H1 (cell line): ENCODE measurements at regions of chr12 and their contacts with region 1.

Region 1: DNA sequence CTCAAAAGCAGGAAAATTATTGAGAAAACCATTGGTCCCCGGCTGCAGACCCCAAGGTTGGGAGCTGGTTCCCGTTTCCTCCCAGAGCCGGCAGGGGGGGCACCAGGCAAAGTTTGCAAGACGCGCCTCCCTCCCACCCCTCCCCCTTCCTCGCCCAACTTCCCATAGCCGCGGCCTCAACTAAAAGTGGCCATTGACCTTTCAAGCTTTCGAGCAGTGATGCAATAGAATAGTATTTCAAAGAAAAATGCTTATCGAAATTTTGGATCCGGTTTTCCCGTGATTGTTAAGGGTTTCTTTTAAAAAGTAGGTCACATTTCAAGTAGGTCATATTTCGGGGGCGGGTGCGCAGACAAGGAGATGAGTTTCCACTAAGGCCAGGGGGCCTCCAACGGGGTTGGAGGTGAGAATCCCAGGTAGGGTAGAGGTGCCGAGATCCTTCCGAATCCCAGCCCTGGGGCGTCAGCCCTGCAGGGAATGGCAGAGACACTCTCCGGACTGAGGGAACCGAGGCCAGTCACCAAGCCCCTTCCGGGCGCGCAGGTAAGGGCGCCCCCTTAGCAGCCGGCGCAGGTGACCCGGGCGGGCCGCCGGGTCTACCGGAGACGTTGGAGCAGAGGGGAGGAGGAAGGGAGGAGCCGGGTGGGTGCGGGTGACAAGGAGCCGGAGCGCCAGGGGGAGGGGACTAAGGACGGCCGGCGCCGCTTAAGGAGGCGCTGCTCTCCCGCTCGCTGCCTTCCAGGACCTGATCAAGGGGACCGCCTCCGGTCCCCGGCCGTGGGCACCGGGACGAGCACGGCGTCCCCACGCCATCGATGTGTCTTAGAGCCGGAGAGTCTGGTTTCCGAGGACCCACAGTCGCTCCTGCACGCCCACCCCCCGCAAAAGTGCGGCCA is 2.6 kb upstream of the SOCS2 start:
- DNase-seq: peak in 1 of 2 experiments; percentile 91
- H3K4me3 ChIP-seq: peak overlapping the region; percentile 68 to 82 (median 74)
- H3K27ac ChIP-seq: no peak overlapping the region
- H3K4me1 ChIP-seq: peaks cover 0 to 2% (median 0%) of the 10 kb centered on the region in 4 experiments; a peak in 5 of 7 replicates
- H3K27me3 ChIP-seq: peaks cover 0 to 30% (median 18%) of the 10 kb centered on the region in 4 experiments; a peak in 5 of 7 replicates
- CTCF ChIP-seq: peak; percentile 63 to 84 (median 70)
- EP300 ChIP-seq: no peak
- POLR2A ChIP-seq: no peak; a peak in 1 of 3 replicates
- RAD21 ChIP-seq: peak; percentile 87 to 91

Region 2: GRCh38 chr12:93197067-93197593 is 372.8 kb before region 1 on chr12:
- CTCF ChIA-PET with region 1: no interaction called
- POLR2A ChIA-PET with region 1: no interaction called
- DNase-seq: no peak
- H3K4me3 ChIP-seq: no peak overlapping the region
- H3K27ac ChIP-seq: no peak overlapping the region
- H3K4me1 ChIP-seq: no peaks in the 10 kb centered on the region
- H3K27me3 ChIP-seq: no peaks in the 10 kb centered on the region
- CTCF ChIP-seq: no peak
- EP300 ChIP-seq: no peak
- POLR2A ChIP-seq: no peak
- RAD21 ChIP-seq: no peak

Region 3: GRCh38 chr12:93547778-93548177 is 22.1 kb before region 1 on chr12:
- CTCF ChIA-PET with region 1: no interaction called
- POLR2A ChIA-PET with region 1: no interaction called
- DNase-seq: no peak
- H3K4me3 ChIP-seq: no peak overlapping the region
- H3K27ac ChIP-seq: no peak overlapping the region
- H3K4me1 ChIP-seq: no peaks in the 10 kb centered on the region
- H3K27me3 ChIP-seq: no peaks in the 10 kb centered on the region
- CTCF ChIP-seq: no peak
- EP300 ChIP-seq: no peak
- POLR2A ChIP-seq: no peak
- RAD21 ChIP-seq: no peak

Region 4: GRCh38 chr12:93582116-93582772 is 12.3 kb after region 1 on chr12:
- CTCF ChIA-PET with region 1: interaction called, 23 read pairs
- POLR2A ChIA-PET with region 1: interaction called, 41 read pairs
- DNase-seq: no peak
- H3K4me3 ChIP-seq: no peak overlapping the region
- H3K27ac ChIP-seq: no peak overlapping the region
- H3K4me1 ChIP-seq: peaks cover 3 to 18% (median 10%) of the 10 kb centered on the region in 4 experiments; a peak in 6 of 7 replicates
- H3K27me3 ChIP-seq: no peaks in the 10 kb centered on the region
- CTCF ChIP-seq: no peak
- EP300 ChIP-seq: no peak
- POLR2A ChIP-seq: no peak
- RAD21 ChIP-seq: no peak

Region 5: GRCh38 chr12:93677195-93678064 is 107.5 kb after region 1 on chr12 and contains the start of gene CRADD:
- CTCF ChIA-PET with region 1: interaction called, 15 read pairs
- POLR2A ChIA-PET with region 1: interaction called, 12 read pairs
- DNase-seq: peak; percentile 82 to 92
- H3K4me3 ChIP-seq: peak within 1 kb of the TSS; percentile 72 to 88 (median 80)
- H3K27ac ChIP-seq: peak within 1 kb of the TSS; percentile 88
- H3K4me1 ChIP-seq: peaks cover 3 to 9% (median 4%) of the 10 kb centered on the region in 4 experiments; a peak in 3 of 7 replicates
- H3K27me3 ChIP-seq: no peaks in the 10 kb centered on the region
- CTCF ChIP-seq: peak in 1 of 3 experiments; percentile 9; a peak in 1 of 4 replicates
- EP300 ChIP-seq: peak in 1 of 2 experiments; percentile 61; a peak in 1 of 3 replicates
- POLR2A ChIP-seq: peak; percentile 41 to 82
- RAD21 ChIP-seq: peak; percentile 0 to 26; a peak in 2 of 4 replicates
- total RNA-seq, gene CRADD: 7.5 and 8.1 TPM in 2 replicates

Region 6: GRCh38 chr12:93742110-93742934 is 172.4 kb after region 1 on chr12:
- CTCF ChIA-PET with region 1: interaction called, 6 read pairs
- POLR2A ChIA-PET with region 1: interaction called, 37 read pairs
- DNase-seq: peak; percentile 13 to 68
- H3K4me3 ChIP-seq: peak overlapping the region; percentile 36 to 68 (median 56); a peak in 7 of 8 replicates
- H3K27ac ChIP-seq: peak overlapping the region; percentile 87
- H3K4me1 ChIP-seq: peaks cover 0 to 17% (median 12%) of the 10 kb centered on the region in 4 experiments; a peak in 4 of 7 replicates
- H3K27me3 ChIP-seq: no peaks in the 10 kb centered on the region
- CTCF ChIP-seq: peak; percentile 33 to 51 (median 38)
- EP300 ChIP-seq: no peak
- POLR2A ChIP-seq: no peak
- RAD21 ChIP-seq: peak; percentile 45 to 68; a peak in 3 of 4 replicates

Region 7: DNA sequence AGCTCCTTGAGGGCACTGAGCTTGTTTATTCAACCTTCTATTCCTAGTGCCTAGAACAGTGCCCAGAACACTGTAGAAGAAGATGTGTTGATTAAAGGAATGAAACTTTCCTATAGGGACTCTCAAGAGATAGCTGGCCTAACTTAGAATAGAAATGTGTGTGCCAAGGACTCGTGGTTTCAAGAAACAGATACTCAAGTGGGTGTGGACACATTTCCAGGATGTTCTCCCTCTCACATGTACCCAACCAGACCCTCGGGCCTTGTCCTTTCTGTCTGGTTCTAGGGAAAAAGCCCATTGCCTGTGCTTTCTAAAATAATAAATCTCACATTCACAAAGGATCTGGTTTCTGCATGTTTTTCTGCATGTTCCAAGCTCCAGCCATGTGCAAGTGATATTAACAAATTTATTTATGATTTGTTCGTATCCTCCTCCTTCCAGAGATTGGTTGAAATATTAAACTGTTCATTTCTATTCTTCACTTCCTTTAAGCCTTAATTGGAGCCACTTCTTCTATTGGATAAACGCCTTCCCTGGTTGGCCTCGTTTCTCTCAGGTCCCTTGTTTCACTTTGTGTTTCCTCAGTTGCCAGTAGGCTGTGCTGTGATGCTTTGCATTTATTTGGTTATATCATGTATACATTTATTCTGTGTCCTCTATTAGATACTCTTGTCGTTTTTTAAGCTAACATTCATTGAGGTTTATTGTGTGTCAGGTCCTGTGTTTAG is 197.1 kb after region 1 on chr12:
- CTCF ChIA-PET with region 1: interaction called, 11 read pairs
- POLR2A ChIA-PET with region 1: interaction called, 3 read pairs
- DNase-seq: no peak
- H3K4me3 ChIP-seq: no peak overlapping the region
- H3K27ac ChIP-seq: no peak overlapping the region
- H3K4me1 ChIP-seq: no peaks in the 10 kb centered on the region; a peak in 3 of 7 replicates
- H3K27me3 ChIP-seq: no peaks in the 10 kb centered on the region
- CTCF ChIP-seq: peak in 2 of 3 experiments; percentile 49 to 50; a peak in 2 of 4 replicates
- EP300 ChIP-seq: no peak
- POLR2A ChIP-seq: no peak
- RAD21 ChIP-seq: peak; percentile 69 to 80